ENCODE measurements at regions of chr1 and their contacts with region 1.

Region 1: GRCh38 chr1:158434741-158435140 is 8.7 kb upstream of the OR10K2 start:
- DNase-seq: no peak
- ATAC-seq: no peak
- H3K4me3 ChIP-seq: no peak overlapping the region
- H3K4me3 Mint-ChIP-seq: no peak overlapping the region
- H3K27ac ChIP-seq: no peak overlapping the region
- H3K27ac Mint-ChIP-seq: no peak overlapping the region
- H3K4me1 ChIP-seq: no peaks in the 10 kb centered on the region
- H3K4me1 Mint-ChIP-seq: no peaks in the 10 kb centered on the region
- H3K27me3 ChIP-seq: peaks cover 0 to 11% of the 10 kb centered on the region in 2 experiments
- H3K27me3 Mint-ChIP-seq: peaks cover 23 to 37% of the 10 kb centered on the region in 2 donors

Region 2: DNA sequence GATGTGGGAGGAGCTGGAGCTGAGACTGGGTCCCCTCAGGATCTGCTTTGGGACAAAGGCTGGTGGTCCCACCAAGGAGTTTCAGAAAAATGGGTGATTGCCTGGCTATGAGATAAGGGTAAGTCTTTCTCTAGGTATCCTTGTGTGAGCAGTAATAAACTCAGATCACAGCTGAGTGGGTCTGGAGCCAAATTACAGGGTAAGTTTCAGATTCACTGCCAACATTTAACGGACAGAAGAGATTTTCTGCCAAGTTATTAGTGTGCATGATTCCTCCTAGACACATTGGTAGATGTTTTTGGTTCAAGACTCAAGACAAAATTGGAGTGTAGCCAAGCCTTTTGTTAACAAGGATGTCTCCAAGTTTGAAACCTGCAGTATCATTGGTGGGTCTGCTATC is 110.9 kb before region 1 on chr1:
- CTCF ChIA-PET with region 1: no interaction called
- POLR2A ChIA-PET with region 1: interaction called in 1 of 2 experiments, 13 read pairs
- DNase-seq: no peak
- ATAC-seq: no peak
- H3K4me3 ChIP-seq: no peak overlapping the region
- H3K4me3 Mint-ChIP-seq: no peak overlapping the region
- H3K27ac ChIP-seq: no peak overlapping the region
- H3K27ac Mint-ChIP-seq: no peak overlapping the region
- H3K4me1 ChIP-seq: no peaks in the 10 kb centered on the region
- H3K4me1 Mint-ChIP-seq: peaks cover 0 to 1% (median 0%) of the 10 kb centered on the region in 3 donors
- H3K27me3 ChIP-seq: peaks cover 0 to 3% of the 10 kb centered on the region in 2 experiments
- H3K27me3 Mint-ChIP-seq: peaks cover 13 to 16% of the 10 kb centered on the region in 2 donors

Measured in T-cell (primary cell).